Vagina (tissue), 2 donors: ENCODE measurements at regions of chr5 and their contacts with region 1.

Region 1: DNA sequence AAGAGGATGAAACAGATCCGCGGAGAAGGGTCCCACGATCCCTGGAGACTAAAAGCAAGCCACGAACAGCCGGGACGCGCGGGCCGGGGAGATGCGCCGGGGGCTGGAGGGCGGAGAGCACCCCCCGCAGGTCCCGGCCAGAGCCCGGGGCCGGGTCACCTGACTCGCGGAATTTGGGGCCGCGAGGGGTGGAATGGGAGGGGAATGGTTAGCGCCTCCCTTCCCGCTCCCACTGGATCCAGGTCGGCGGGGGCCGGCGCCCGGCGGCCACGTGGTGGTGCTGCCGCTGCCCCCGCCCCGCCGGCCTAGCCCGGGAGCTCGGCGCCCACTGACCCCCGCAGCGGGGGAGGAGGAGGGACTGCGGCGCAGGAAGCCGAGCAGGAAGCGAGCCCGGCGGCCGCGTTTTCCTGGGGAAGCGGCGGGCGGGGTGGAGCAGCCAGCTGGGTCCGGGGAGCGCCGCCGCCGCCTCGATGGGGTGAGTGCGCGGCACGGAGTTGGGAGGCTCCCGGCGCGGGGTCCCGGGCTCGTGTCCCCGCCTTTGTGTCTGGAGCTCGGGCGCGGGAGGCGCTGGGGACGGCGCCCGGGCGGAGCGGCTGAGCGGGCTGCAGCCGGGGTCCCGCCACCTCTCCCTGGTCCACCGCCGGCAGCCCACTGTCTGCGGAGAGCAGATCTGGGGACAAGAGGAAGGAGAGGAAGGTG is at the start of gene RAI14:
- DNase-seq: peak in 1 of 2 donors; percentile 92
- H3K4me3 ChIP-seq: peak within 1 kb of the TSS; percentile 70 to 90
- H3K27ac ChIP-seq: peak within 1 kb of the TSS; percentile 96
- H3K4me1 ChIP-seq: peaks cover 22% of the 10 kb centered on the region
- H3K27me3 ChIP-seq: no peaks in the 10 kb centered on the region
- CTCF ChIP-seq: no peak
- POLR2A ChIP-seq: peak in 1 of 2 donors; percentile 55
- total RNA-seq, gene RAI14: 30.7 TPM

Region 2: GRCh38 chr5:34695275-34696027 is 39.3 kb after region 1 on chr5:
- intact Hi-C with region 1: loop called (anchors 2 kb)
- DNase-seq: no peak
- H3K4me3 ChIP-seq: no peak overlapping the region
- H3K27ac ChIP-seq: peak overlapping the region; percentile 42
- H3K4me1 ChIP-seq: peaks cover 57% of the 10 kb centered on the region
- H3K27me3 ChIP-seq: no peaks in the 10 kb centered on the region
- CTCF ChIP-seq: no peak
- POLR2A ChIP-seq: no peak

Region 3: DNA sequence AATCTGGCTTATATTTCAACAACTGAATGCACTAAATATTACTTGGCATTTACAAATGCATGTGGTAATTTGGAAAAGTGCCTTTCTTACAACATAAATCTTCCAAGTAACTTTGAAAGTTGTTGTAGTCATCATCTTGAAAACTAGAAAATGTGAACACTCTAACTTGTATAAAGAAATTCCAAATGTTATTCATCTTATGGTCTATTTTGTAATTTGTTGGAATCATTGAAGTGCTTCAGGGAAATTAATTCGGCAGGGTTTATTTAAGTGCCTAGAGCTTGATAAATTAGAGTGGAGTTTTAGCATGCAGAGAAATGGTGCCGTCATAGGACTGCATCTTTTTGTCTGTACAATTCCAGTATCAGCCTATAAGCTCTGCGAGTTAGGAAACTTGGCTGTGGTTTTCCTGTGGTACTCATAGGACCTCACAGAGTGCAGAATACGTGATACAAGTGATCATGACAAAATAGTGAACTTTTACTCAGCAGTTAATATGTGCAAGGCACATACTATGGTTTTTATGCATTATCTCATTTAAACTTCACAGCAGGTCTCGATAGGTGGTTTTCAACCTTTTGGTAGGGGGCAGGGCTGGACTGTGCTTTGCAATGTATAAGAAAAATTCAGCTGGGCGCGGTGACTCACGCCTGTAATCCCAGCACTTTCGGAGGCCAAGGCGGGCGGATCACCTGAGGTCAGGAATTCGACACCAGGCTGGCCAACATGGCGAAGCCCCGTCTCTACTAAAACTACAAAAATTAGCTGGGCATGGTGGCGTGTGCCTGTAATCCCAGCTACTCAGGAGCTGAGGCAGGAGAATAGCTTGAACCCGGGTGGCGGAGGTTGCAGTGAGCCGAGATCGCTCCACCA is 79.6 kb after region 1 on chr5:
- intact Hi-C with region 1: loop called (anchors 2 kb)
- DNase-seq: no peak
- H3K4me3 ChIP-seq: no peak overlapping the region
- H3K27ac ChIP-seq: no peak overlapping the region
- H3K4me1 ChIP-seq: peaks cover 35% of the 10 kb centered on the region
- H3K27me3 ChIP-seq: no peaks in the 10 kb centered on the region
- CTCF ChIP-seq: no peak
- POLR2A ChIP-seq: no peak